Mammary epithelial cell (primary cell): ENCODE measurements at regions of chr11 and their contacts with region 1.

Region 1: GRCh38 chr11:125933030-125933813 is 12.6 kb upstream of the VSIG10L2 start:
- DNase-seq: no peak
- H3K4me3 ChIP-seq: no peak overlapping the region
- H3K27ac ChIP-seq: no peak overlapping the region
- H3K4me1 ChIP-seq: no peaks in the 10 kb centered on the region
- H3K27me3 ChIP-seq: peaks cover 4% of the 10 kb centered on the region
- CTCF ChIP-seq: no peak

Region 2: GRCh38 chr11:125835748-125836147 is 97.5 kb before region 1 on chr11:
- CTCF ChIA-PET with region 1: no interaction called
- dilution Hi-C with region 1: no loop called
- in situ Hi-C with region 1: no loop called
- intact Hi-C with region 1: no loop called
- DNase-seq: no peak
- H3K4me3 ChIP-seq: no peak overlapping the region
- H3K27ac ChIP-seq: no peak overlapping the region
- H3K4me1 ChIP-seq: no peaks in the 10 kb centered on the region
- H3K27me3 ChIP-seq: no peaks in the 10 kb centered on the region
- CTCF ChIP-seq: no peak

Region 3: DNA sequence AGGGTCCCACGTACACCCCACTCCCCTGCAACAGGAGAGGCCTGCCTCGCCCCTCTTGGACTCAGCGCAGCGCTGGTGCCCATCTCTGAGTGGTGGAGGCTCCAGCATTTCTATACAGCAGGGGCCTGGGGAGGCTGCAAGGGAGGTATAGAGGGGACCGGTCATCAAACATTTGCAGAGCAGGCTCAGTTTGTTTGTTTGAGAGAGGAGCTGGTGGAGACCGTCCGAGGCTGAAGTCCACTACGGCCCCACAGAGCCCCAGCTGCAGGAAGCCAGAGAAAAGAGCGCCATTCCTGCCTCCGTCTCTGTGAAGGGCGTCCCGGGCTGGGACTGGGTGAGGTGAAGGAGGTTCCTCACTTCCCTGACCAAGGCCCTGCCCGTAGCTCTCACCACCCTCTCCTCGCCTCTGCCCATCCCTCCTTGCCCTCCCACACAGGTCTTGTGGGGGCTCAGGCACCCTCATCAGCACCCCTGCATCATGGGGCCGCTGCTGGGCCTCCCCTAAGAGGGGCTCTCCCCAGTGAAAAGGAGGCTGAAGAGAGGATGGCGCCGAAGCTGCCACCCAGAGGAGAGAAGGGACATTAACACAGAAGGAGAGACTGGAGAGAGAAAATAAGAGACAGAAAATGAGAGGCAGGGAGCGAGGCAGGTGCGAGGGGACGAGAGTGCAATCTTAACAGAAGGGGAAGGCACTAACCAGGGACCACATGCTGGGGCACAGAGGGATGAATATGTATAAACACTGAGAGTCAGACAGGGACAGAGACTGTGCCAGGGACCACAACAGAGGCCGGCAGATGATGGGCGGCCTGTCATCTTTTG is 253.7 kb after region 1 on chr11:
- CTCF ChIA-PET with region 1: no interaction called
- dilution Hi-C with region 1: no loop called
- in situ Hi-C with region 1: loop called in 1 of 2 experiments (anchors 5 kb)
- intact Hi-C with region 1: no loop called
- DNase-seq: no peak
- H3K4me3 ChIP-seq: no peak overlapping the region
- H3K27ac ChIP-seq: no peak overlapping the region
- H3K4me1 ChIP-seq: no peaks in the 10 kb centered on the region
- H3K27me3 ChIP-seq: no peaks in the 10 kb centered on the region
- CTCF ChIP-seq: peak in 1 of 2 donors; percentile 12